BJ (cell line): ENCODE measurements at regions of chr9 and their contacts with region 1.

Region 1: GRCh38 chr9:133768859-133769425 is 30.8 kb upstream of the SARDH start:
- DNase-seq: no peak
- H3K4me3 ChIP-seq: no peak overlapping the region
- H3K27me3 ChIP-seq: no peaks in the 10 kb centered on the region
- CTCF ChIP-seq: no peak

Region 2: DNA sequence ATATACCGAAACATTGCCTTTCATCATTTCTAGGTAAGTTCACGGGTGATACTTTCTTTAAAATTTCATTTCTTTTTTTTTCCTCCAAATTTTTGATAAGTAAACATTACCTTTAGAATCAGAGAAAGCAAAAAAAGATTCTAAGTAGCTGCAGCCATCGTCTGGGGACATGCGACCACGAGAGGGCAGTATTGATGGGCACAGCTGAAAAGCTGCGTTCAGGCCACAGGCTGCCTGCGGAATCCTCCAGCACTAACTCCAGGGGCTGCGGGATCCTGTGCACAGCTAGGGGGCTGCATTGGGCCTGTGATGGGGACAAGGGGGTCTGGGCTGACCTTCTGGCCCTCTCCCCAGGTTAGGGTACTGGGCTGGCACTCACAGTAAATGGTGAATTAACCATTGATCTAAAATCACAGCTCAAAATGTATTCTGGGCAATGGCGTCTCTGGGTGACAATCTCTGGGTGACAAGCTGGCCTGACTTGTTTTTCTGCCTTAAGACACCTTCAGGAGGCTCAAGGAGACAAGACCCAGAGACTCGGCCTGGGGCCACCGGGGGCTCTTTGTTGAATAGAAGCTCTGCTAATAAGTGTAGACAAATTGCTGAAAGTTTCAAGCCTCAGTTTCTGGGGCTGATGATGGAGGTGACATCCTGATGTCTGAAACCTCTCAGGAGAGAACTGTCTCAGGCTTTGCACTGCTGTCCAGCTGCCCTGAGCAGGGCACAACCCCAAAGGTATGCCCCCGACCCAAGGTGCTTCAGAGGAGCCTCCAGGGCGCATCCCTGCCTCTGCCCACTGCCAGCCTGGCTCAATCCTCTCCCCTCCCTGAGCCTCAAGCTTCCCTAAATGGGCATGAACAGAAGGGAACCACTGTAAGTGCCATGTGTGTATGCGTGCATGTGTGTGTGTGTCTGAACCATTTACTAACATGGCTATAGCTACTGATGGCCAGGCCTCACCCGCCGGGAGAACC is 13.5 kb after region 1 on chr9:
- CTCF ChIA-PET with region 1: interaction called, 16 read pairs
- POLR2A ChIA-PET with region 1: no interaction called
- DNase-seq: no peak
- H3K4me3 ChIP-seq: no peak overlapping the region
- H3K27me3 ChIP-seq: no peaks in the 10 kb centered on the region
- CTCF ChIP-seq: peak; percentile 92